Heart right ventricle (tissue), 16 donors: ENCODE measurements at regions of chr3 and their contacts with region 1.

Region 1: GRCh38 chr3:54882129-54882833 is 45.6 kb downstream of the LRTM1 start:
- DNase-seq: no peak
- ATAC-seq: peak; percentile 61 to 92 (median 81)
- H3K4me3 ChIP-seq: no peak overlapping the region
- H3K27ac ChIP-seq: peak overlapping the region in 7 of 10 donors; percentile 7 to 66 (median 44)
- H3K4me1 ChIP-seq: peaks cover 0 to 12% (median 0%) of the 10 kb centered on the region in 9 donors
- H3K27me3 ChIP-seq: peaks cover 0 to 9% (median 0%) of the 10 kb centered on the region in 7 donors
- CTCF ChIP-seq: no peak

Region 2: DNA sequence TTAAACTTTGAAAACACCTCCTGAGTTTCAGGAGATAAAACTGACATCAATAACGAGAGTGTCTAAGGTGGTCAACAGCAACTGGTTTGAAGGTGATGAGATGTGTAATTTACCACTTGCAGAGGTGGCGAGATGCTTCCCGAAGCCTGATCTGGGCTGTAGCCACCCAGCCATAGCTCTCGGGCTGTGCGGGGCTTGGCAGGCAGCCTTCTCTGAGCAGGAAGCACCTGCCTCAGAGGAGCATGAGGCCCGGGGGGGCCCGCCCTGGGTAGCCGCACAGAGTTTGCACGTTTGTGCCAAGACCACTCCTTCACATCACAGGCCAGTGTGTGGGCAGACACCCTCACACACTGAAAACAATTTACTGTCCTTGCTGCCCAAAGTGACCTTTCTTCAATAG is 539.6 kb before region 1 on chr3:
- intact Hi-C with region 1: no loop called
- DNase-seq: no peak
- ATAC-seq: peak in 5 of 8 donors; percentile 33 to 63 (median 59)
- H3K4me3 ChIP-seq: no peak overlapping the region
- H3K27ac ChIP-seq: no peak overlapping the region
- H3K4me1 ChIP-seq: peaks cover 0 to 7% (median 0%) of the 10 kb centered on the region in 9 donors
- H3K27me3 ChIP-seq: peaks cover 0 to 5% (median 0%) of the 10 kb centered on the region in 7 donors
- CTCF ChIP-seq: no peak

Region 3: DNA sequence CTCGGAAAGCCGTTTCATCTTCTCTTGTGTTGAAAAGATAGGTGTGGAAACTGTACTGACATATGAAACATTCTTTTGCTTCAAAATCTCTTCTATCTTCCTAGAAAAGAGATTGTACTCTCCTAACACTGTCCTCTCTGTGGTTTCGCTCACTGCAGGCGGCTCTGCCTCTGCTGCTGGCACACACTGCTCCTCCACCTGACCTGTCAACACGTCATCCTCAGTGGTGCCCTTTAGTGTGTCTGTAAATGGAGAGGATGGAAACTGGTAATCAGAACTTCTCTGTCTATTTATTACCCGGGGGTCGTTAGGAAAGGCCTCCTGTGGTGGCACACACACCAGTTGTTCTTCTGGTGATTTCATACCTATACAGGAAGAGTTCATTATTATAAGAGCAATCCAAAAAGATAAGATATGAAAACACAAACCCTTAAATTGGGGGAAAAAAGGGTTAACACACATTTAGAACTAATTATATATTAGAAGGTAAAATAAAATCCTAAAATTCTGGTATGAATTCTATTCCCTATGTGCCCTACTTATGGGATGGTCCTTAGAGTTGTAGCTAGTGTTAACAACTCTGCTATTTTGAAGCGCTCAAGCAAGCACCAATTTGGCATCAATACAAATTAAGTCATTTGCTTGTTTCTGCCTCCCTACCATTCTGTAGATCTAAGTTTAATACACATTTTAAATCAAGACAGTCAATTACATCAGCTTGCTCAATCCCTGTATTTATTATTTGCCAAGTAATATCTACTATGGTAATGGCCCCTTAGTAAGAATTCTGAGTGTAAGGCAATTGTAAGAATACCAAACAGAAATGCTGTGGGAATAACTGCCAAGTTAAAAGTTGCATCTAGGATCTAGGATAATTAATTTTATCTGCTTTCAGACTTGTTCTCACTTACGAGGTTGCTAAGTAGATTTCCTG is 1751.6 kb after region 1 on chr3:
- intact Hi-C with region 1: loop called in 1 of 10 experiments (anchors 5 kb)
- DNase-seq: peak; percentile 35 to 50
- ATAC-seq: peak; percentile 85 to 97 (median 94)
- H3K4me3 ChIP-seq: no peak overlapping the region
- H3K27ac ChIP-seq: peak overlapping the region in 5 of 10 donors; percentile 11 to 31 (median 29)
- H3K4me1 ChIP-seq: peaks cover 0 to 31% (median 9%) of the 10 kb centered on the region in 9 donors
- H3K27me3 ChIP-seq: no peaks in the 10 kb centered on the region
- CTCF ChIP-seq: no peak